H1 (cell line): ENCODE measurements at regions of chr20 and their contacts with region 1.

Region 1: DNA sequence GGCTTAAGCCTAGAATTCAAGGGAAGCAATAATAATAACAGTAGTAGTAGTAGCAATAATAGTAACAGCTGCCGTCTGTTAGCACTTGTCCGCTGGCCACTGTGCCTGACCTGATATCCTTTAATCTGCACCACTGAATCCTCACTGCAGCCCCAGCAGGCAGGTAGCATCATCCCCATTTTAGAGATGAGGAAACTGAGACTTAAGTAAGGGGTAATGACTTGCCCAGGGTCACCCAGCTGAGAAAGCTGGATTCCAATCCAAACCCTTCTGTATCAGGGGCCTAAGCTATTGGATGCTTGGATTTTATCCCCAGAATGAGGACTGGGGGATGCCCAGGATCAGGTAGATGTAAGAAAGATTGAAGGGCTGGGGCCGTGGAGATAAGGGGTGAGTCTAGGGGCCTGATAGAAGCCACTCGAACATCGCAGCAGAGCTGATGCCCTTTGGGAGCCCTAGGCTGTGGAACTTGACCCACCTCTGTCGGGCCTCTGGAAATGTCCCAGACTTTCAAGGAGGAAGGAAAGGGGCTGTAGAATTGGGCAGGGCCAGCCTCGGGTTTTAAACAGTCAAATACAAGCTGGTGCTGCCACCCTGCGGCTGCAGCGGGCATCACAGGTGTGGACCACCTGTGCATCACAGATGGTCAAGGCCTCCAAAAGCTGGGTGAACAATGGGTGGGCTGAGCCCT is 102.1 kb upstream of the MYL9 start:
- DNase-seq: peak; percentile 60 to 96
- H3K4me3 ChIP-seq: no peak overlapping the region
- H3K27ac ChIP-seq: no peak overlapping the region
- H3K4me1 ChIP-seq: peaks cover 0 to 6% (median 2%) of the 10 kb centered on the region in 4 experiments; a peak in 3 of 7 replicates
- H3K27me3 ChIP-seq: peaks cover 0 to 10% (median 5%) of the 10 kb centered on the region in 4 experiments; a peak in 3 of 7 replicates
- CTCF ChIP-seq: peak; percentile 95 to 98 (median 96)
- EP300 ChIP-seq: no peak
- POLR2A ChIP-seq: no peak
- RAD21 ChIP-seq: peak; percentile 97

Region 2: DNA sequence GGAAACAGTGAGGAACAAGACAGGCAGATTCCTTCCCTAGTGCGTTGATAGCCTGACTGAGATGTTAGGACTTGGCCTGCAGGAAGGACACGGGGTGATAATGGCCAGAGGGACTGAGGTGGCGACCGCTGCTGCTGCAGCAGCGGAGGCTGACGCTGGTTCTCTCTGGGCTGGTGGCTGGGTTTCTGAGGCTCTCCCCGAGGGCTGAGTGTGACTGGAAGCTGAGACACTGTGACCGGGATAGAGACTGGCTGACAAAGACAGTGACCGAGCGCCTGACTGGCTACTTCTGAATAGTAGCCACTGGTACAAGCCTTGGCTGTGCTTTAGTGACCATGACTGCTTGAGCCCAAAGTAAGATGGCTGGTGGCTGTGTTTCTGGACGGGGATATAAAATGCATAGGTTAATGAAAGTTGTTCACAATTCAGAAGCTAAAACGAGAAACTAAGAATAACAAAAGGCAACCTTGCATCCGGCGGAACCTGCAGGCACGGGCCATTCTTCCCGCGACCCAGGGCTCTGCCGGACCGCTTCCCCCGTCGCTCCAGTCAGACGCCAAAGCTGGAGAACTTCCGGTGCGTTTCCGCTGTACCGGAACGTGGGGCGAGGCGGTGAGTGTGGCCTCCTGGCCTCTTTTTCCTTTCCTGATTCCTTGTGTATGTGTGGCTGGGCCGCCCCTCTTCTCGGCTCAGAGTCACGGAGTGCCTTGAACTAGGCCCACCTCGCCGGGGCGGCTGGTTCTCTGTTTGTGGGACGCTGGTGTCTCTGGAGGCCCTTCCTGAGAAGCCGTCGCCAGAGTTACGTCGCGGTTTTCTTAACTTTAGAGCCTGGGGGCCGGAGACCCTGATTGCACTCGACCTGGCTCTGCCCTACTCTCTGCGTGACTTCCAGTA is 203.0 kb before region 1 on chr20 and contains the start of gene AAR2:
- CTCF ChIA-PET with region 1: interaction called, 13 read pairs
- POLR2A ChIA-PET with region 1: no interaction called
- DNase-seq: peak; percentile 43 to 88
- H3K4me3 ChIP-seq: peak within 1 kb of the TSS; percentile 73 to 92 (median 82)
- H3K27ac ChIP-seq: peak within 1 kb of the TSS; percentile 74
- H3K4me1 ChIP-seq: peaks cover 0 to 7% (median 5%) of the 10 kb centered on the region in 4 experiments; a peak in 6 of 7 replicates
- H3K27me3 ChIP-seq: no peaks in the 10 kb centered on the region
- CTCF ChIP-seq: no peak
- EP300 ChIP-seq: peak in 1 of 2 experiments; percentile 35; a peak in 1 of 3 replicates
- POLR2A ChIP-seq: peak; percentile 83 to 93
- RAD21 ChIP-seq: no peak
- total RNA-seq, gene AAR2: 25.4 and 25.5 TPM in 2 replicates

Region 3: GRCh38 chr20:36285746-36286447 is 153.3 kb before region 1 on chr20:
- CTCF ChIA-PET with region 1: interaction called, 13 read pairs
- POLR2A ChIA-PET with region 1: no interaction called
- DNase-seq: no peak
- H3K4me3 ChIP-seq: no peak overlapping the region
- H3K27ac ChIP-seq: no peak overlapping the region
- H3K4me1 ChIP-seq: no peaks in the 10 kb centered on the region
- H3K27me3 ChIP-seq: no peaks in the 10 kb centered on the region
- CTCF ChIP-seq: peak in 1 of 3 experiments; percentile 42; a peak in 2 of 4 replicates
- EP300 ChIP-seq: no peak
- POLR2A ChIP-seq: no peak
- RAD21 ChIP-seq: peak in 1 of 2 experiments; percentile 47; a peak in 2 of 4 replicates

Region 4: GRCh38 chr20:36399147-36399968 is 39.8 kb before region 1 on chr20:
- CTCF ChIA-PET with region 1: interaction called, 37 read pairs
- POLR2A ChIA-PET with region 1: no interaction called
- DNase-seq: peak; percentile 78 to 97
- H3K4me3 ChIP-seq: no peak overlapping the region
- H3K27ac ChIP-seq: no peak overlapping the region
- H3K4me1 ChIP-seq: peaks cover 0 to 6% (median 3%) of the 10 kb centered on the region in 4 experiments; a peak in 4 of 7 replicates
- H3K27me3 ChIP-seq: no peaks in the 10 kb centered on the region
- CTCF ChIP-seq: peak; percentile 75 to 97 (median 91)
- EP300 ChIP-seq: peak in 1 of 2 experiments; percentile 52; a peak in 1 of 3 replicates
- POLR2A ChIP-seq: no peak
- RAD21 ChIP-seq: peak; percentile 89 to 95

Region 5: DNA sequence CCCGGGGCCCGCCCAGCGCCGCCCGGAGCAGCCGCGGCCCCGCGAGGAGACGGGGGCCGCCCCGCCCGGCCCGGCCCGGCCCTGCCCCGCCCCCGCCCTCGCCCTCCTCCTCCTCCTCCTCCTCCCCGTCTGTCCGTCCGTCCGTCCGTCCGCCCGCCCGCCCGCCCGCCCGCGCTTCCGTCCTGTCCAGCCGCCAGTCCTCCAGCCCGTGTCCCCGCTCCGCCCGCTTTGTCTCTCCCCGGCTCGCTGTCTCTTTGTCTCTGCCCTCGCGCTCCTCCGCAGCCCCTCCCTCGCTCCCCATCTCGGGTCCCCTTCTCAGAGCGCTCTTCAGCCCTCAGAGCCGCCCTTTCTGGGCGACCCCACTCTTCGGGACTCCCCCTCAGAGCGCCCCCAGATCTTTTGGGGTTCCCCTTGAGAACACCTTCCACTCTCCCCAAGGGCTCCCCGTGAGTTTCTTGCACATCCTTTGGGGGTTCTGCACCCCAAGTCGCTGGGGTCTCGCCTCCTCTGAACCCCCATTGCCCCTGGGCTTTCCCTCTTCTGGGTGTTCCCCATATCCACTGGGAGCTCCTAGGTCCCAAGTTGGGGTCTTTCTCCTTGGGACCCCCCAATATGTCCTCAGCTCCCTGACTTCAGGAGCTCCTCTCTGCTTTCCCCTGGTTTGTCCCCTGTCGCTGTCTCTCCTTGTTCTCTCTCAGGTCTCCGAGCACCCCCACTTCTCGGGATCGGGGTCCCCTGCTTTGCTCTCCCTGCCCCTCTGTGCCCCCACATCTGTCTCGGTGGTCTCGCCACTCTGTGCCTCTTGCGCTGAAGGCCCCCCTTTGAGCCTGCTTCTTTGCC is 22.6 kb after region 1 on chr20:
- CTCF ChIA-PET with region 1: interaction called, 11 read pairs
- POLR2A ChIA-PET with region 1: interaction called, 3 read pairs
- DNase-seq: peak in 1 of 2 experiments; percentile 62
- H3K4me3 ChIP-seq: peak overlapping the region; percentile 75 to 99 (median 88)
- H3K27ac ChIP-seq: no peak overlapping the region; the same call in 1 of the 2 replicates
- H3K4me1 ChIP-seq: peaks cover 11 to 33% (median 19%) of the 10 kb centered on the region in 4 experiments
- H3K27me3 ChIP-seq: no peaks in the 10 kb centered on the region; a peak in 1 of 7 replicates
- CTCF ChIP-seq: no peak
- EP300 ChIP-seq: no peak
- POLR2A ChIP-seq: no peak; a peak in 2 of 3 replicates
- RAD21 ChIP-seq: no peak